PC-3 (cell line): ENCODE measurements at regions of chr7 and their contacts with region 1.

Region 1: GRCh38 chr7:148987010-148987750 is 41.1 kb downstream of the PDIA4 start:
- DNase-seq: peak; percentile 89
- ATAC-seq: peak; percentile 85
- H3K4me3 ChIP-seq: peak overlapping the region; percentile 81
- H3K27ac ChIP-seq: peak overlapping the region; percentile 51
- H3K4me1 ChIP-seq: peaks cover 24% of the 10 kb centered on the region
- H3K27me3 ChIP-seq: no peaks in the 10 kb centered on the region
- CTCF ChIP-seq: no peak

Region 2: GRCh38 chr7:149071641-149072437 is 84.7 kb after region 1 on chr7:
- CTCF ChIA-PET with region 1: no interaction called
- POLR2A ChIA-PET with region 1: no interaction called
- intact Hi-C with region 1: loop called (anchors 5 kb)
- DNase-seq: no peak
- ATAC-seq: no peak
- H3K4me3 ChIP-seq: no peak overlapping the region
- H3K27ac ChIP-seq: no peak overlapping the region
- H3K4me1 ChIP-seq: no peaks in the 10 kb centered on the region
- H3K27me3 ChIP-seq: no peaks in the 10 kb centered on the region
- CTCF ChIP-seq: no peak

Region 3: DNA sequence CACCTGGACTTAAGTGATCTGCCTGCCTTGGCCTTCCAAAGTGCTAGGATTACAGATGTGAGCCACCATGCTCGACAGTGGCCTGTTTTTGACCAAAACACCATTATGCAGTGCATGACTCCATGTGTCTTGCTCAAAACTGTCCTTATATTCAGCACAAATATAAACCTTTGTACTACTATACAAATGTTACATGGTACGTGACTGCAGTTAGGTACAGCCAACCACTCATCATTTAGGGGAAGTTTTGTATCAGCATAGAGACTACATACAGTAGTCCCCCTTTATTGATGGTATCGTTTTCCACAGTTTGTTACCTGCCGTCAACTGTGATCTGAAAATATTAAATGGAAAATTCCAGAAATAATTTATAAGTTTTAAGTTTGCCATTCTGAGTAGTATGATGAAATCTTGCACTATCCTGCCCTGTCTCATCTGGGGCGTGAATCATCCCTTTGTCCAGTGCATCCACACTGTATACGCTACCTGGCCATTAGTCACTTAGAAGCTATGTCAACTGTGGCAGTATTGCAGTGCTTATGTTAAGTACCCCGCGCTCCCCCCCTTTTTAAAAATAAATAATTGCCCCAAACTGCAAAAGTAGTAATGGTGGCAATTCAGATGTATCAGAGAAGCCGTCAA is 184.8 kb after region 1 on chr7:
- CTCF ChIA-PET with region 1: no interaction called
- POLR2A ChIA-PET with region 1: no interaction called
- intact Hi-C with region 1: no loop called
- DNase-seq: peak; percentile 87
- ATAC-seq: peak; percentile 100
- H3K4me3 ChIP-seq: no peak overlapping the region
- H3K27ac ChIP-seq: peak overlapping the region; percentile 79
- H3K4me1 ChIP-seq: peaks cover 13% of the 10 kb centered on the region
- H3K27me3 ChIP-seq: no peaks in the 10 kb centered on the region
- CTCF ChIP-seq: no peak

Region 4: GRCh38 chr7:149201731-149202130 is 214.6 kb after region 1 on chr7:
- CTCF ChIA-PET with region 1: no interaction called
- POLR2A ChIA-PET with region 1: interaction called, 13 read pairs
- intact Hi-C with region 1: no loop called
- DNase-seq: no peak
- ATAC-seq: no peak
- H3K4me3 ChIP-seq: no peak overlapping the region
- H3K27ac ChIP-seq: no peak overlapping the region
- H3K4me1 ChIP-seq: peaks cover 44% of the 10 kb centered on the region
- H3K27me3 ChIP-seq: no peaks in the 10 kb centered on the region
- CTCF ChIP-seq: no peak